ENCODE measurements at regions of chr16 and their contacts with region 1.

Region 1: GRCh38 chr16:3234543-3235541 is at the start of gene ZNF200:
- DNase-seq: peak; percentile 98
- ATAC-seq: peak; percentile 94
- H3K4me3 Mint-ChIP-seq: peak within 1 kb of the TSS; percentile 81
- H3K27ac Mint-ChIP-seq: peak within 1 kb of the TSS; percentile 97
- H3K4me1 Mint-ChIP-seq: peaks cover 34% of the 10 kb centered on the region
- H3K27me3 Mint-ChIP-seq: no peaks in the 10 kb centered on the region
- CTCF ChIP-seq: no peak
- total RNA-seq, gene ZNF200: 8.7 to 9.6 TPM

Region 2: GRCh38 chr16:3214904-3215600 is 19.8 kb before region 1 on chr16:
- CTCF ChIA-PET with region 1: no interaction called
- POLR2A ChIA-PET with region 1: interaction called, 10 read pairs
- intact Hi-C with region 1: no loop called
- DNase-seq: peak; percentile 64
- ATAC-seq: peak; percentile 82
- H3K4me3 Mint-ChIP-seq: peak overlapping the region; percentile 34
- H3K27ac Mint-ChIP-seq: peak overlapping the region; percentile 98
- H3K4me1 Mint-ChIP-seq: peaks cover 35% of the 10 kb centered on the region
- H3K27me3 Mint-ChIP-seq: no peaks in the 10 kb centered on the region
- CTCF ChIP-seq: no peak

Region 3: DNA sequence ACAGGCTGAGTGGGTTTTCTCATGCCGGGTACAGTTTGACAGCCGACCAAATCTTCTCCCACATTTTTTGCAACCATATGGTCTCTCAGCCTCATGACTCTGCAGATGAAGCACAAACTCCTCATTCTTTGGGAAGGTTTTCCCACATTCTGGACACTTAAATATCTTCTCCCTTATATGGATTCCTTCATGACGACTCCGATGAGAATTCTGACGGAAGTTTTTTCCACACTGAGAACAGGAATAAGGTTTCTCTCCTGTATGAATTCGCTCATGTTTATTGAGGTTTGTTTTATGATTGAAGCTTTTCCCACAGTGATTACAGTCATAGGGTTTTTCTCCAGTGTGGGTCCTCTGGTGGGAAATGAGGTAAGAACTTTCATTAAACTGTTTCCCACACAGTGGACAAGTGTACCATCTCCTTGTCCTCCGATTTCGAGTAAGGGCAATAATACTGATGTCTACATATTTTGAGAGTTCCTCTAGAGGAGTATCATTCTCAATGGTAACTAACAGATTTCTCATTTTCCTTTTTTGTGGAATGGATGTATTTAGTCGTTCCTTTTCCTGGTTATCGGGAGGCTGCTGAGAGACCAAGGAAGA is 10.8 kb before region 1 on chr16:
- CTCF ChIA-PET with region 1: interaction called, 8 read pairs
- POLR2A ChIA-PET with region 1: interaction called, 13 read pairs
- intact Hi-C with region 1: no loop called
- DNase-seq: no peak
- ATAC-seq: no peak
- H3K4me3 Mint-ChIP-seq: no peak overlapping the region
- H3K27ac Mint-ChIP-seq: no peak overlapping the region
- H3K4me1 Mint-ChIP-seq: no peaks in the 10 kb centered on the region
- H3K27me3 Mint-ChIP-seq: no peaks in the 10 kb centered on the region
- CTCF ChIP-seq: no peak